ENCODE measurements at regions of chr2 and their contacts with region 1.

Region 1: GRCh38 chr2:75928093-75928492 is 217.4 kb upstream of the GCFC2 start:
- DNase-seq: no peak
- ATAC-seq: no peak

Region 2: DNA sequence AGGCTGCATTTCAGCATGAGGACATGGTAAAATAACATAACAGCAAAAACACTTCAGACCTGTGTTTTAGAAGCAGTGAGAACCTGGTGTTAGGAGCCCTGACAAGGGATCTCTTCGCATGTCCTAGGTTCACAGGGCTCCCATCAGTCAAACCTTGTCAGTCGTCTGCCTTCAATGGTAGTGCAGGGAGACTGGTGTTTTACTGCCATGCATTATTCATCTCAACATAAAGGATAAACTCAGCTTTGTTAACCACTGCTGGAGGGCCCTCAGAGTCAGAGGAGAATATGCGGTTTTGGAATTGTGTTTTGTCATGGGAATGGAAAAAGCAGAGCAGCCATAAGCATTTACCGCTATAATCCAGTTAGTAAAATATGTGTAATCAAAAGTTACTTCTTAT is 58.5 kb after region 1 on chr2:
- intact Hi-C with region 1: no loop called
- DNase-seq: no peak
- ATAC-seq: no peak

Region 3: DNA sequence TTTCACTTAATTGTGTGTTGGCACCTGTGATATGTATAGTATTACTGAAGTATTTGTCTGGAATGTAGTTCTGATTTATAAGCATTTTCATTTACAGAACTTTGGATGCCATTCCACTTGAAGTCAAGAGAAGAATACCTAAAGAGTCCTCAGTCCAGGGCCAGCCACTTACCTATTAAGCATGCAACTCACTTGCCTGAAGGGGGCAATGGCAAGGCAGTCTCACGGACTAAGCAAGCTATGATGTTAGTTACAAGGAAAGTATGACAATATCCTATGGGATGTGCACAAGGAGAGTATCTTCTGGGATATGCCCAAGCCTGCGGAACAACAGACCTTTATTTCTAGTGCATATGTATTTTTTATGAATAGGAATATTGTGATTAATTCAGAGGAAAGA is 152.1 kb after region 1 on chr2:
- intact Hi-C with region 1: no loop called
- DNase-seq: no peak
- ATAC-seq: no peak

Region 4: DNA sequence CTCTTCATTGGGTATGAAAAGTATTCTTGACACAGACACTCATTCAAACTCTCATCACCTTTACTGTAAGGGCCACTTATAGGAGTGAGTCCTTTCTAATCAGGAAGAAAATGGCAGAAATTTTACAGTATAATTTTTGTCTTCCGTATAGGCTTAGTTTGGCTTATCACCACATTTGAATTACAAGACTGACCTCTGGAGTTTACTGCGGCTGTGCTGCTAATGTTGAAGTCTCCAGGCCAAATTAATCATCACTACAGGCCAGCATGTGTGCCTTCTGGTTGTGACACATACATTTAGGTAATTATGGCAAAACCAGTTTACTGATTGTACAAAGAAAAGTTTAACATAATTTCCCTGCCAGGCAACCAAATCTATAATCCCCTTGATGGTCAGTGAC is 536.2 kb after region 1 on chr2:
- intact Hi-C with region 1: loop called (anchors 5 kb)
- DNase-seq: no peak
- ATAC-seq: no peak